Uterus (tissue), 4 donors: ENCODE measurements at regions of chr14 and their contacts with region 1.

Region 1: GRCh38 chr14:51776102-51776894 is 84.1 kb upstream of the GNG2 start:
- DNase-seq: peak; percentile 74 to 75
- H3K4me3 ChIP-seq: peak overlapping the region in 1 of 2 donors; percentile 32
- H3K27ac ChIP-seq: peak overlapping the region; percentile 52 to 63
- H3K4me1 ChIP-seq: no peaks in the 10 kb centered on the region
- H3K27me3 ChIP-seq: no peaks in the 10 kb centered on the region
- CTCF ChIP-seq: peak; percentile 75 to 80 (median 80)
- POLR2A ChIP-seq: no peak

Region 2: GRCh38 chr14:51285120-51285519 is 491.2 kb before region 1 on chr14:
- intact Hi-C with region 1: loop called (anchors 5 kb)
- DNase-seq: no peak
- H3K4me3 ChIP-seq: no peak overlapping the region
- H3K27ac ChIP-seq: no peak overlapping the region
- H3K4me1 ChIP-seq: no peaks in the 10 kb centered on the region
- H3K27me3 ChIP-seq: no peaks in the 10 kb centered on the region
- CTCF ChIP-seq: no peak
- POLR2A ChIP-seq: no peak

Region 3: DNA sequence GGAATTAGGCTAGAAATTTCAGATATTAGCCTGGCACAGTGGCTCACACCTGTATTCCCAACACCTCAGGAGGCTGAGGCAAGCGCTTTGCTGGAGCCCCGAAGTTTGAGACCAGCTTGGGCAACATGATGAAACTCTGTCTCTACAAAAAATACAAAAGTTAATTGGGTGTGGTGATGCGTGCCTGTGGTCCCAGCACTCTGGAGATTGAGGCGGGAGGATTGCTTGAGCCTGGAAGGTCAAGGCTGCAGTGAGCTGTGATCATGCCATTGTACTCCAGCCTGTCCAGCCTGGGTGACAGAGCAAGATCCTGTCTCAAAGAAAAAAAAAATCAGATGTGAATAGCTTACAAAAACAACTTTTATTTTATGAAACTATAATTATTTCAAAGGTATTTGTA is 109.5 kb before region 1 on chr14:
- intact Hi-C with region 1: loop called (anchors 10 kb)
- DNase-seq: no peak
- H3K4me3 ChIP-seq: no peak overlapping the region
- H3K27ac ChIP-seq: peak overlapping the region; percentile 34 to 40
- H3K4me1 ChIP-seq: peaks cover 0 to 13% of the 10 kb centered on the region in 2 donors
- H3K27me3 ChIP-seq: no peaks in the 10 kb centered on the region
- CTCF ChIP-seq: no peak
- POLR2A ChIP-seq: no peak